ENCODE measurements at regions of chr1 and their contacts with region 1.

Region 1: DNA sequence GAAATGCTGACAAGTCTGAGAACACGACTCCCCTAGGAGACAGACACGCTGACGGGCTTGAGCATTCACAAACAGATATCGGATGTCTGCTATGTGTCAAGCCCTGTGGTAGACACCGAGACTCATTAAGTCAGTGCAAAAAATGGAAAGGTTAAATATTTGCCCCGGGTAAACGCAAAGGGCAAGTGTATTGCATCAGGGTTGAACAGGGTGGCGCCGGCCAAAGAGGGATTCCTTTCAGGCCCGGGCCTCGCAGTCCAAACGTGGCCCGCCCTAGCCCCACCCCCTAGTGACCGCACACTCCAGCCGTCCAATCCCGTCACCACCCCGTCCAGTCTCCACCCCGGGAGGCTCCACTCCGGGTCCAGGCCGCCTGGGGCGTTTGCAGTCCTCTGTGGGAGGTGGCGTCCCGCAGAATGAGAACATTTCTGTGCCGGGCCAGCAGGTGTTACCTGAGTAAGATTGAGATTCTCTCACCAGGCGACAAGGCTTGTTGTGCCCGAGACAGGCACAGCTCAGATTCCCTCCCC is 16.3 kb upstream of the TMEM9 start:
- DNase-seq: peak; percentile 99
- H3K4me3 ChIP-seq: peak overlapping the region; percentile 33
- H3K4me3 Mint-ChIP-seq: peak overlapping the region; percentile 84
- H3K27ac Mint-ChIP-seq: peak overlapping the region; percentile 91
- H3K4me1 ChIP-seq: peaks cover 44% of the 10 kb centered on the region
- H3K4me1 Mint-ChIP-seq: peaks cover 42% of the 10 kb centered on the region
- H3K27me3 ChIP-seq: no peaks in the 10 kb centered on the region
- H3K27me3 Mint-ChIP-seq: no peaks in the 10 kb centered on the region
- CTCF ChIP-seq: no peak

Region 2: DNA sequence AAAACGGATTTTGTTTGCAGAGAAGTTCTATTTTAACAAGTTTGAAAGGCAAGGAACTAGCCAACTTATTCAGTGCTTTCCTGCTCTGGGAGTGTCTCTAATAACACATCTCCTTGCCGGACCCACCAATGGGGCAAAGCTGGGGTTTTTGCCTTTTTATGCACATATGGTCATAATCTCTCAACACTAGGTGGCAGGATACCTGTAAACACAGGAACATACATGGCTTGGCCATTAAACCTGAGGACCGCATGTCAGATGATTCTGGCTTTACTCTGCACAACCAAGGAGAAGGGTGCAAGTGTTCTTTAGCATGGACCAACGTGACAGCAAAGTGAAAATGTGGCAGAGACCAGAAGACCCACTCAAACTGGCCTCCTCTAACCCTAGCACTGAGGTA is 21.2 kb before region 1 on chr1:
- CTCF ChIA-PET with region 1: interaction called, 10 read pairs
- POLR2A ChIA-PET with region 1: interaction called, 5 read pairs
- intact Hi-C with region 1: loop called (anchors 1 kb)
- DNase-seq: peak in 1 of 2 experiments; percentile 55
- H3K4me3 ChIP-seq: no peak overlapping the region
- H3K4me3 Mint-ChIP-seq: no peak overlapping the region
- H3K27ac Mint-ChIP-seq: no peak overlapping the region
- H3K4me1 ChIP-seq: peaks cover 6% of the 10 kb centered on the region; the same call in 1 of the 2 replicates
- H3K4me1 Mint-ChIP-seq: no peaks in the 10 kb centered on the region
- H3K27me3 ChIP-seq: no peaks in the 10 kb centered on the region
- H3K27me3 Mint-ChIP-seq: no peaks in the 10 kb centered on the region
- CTCF ChIP-seq: peak; percentile 54 to 69

Region 3: DNA sequence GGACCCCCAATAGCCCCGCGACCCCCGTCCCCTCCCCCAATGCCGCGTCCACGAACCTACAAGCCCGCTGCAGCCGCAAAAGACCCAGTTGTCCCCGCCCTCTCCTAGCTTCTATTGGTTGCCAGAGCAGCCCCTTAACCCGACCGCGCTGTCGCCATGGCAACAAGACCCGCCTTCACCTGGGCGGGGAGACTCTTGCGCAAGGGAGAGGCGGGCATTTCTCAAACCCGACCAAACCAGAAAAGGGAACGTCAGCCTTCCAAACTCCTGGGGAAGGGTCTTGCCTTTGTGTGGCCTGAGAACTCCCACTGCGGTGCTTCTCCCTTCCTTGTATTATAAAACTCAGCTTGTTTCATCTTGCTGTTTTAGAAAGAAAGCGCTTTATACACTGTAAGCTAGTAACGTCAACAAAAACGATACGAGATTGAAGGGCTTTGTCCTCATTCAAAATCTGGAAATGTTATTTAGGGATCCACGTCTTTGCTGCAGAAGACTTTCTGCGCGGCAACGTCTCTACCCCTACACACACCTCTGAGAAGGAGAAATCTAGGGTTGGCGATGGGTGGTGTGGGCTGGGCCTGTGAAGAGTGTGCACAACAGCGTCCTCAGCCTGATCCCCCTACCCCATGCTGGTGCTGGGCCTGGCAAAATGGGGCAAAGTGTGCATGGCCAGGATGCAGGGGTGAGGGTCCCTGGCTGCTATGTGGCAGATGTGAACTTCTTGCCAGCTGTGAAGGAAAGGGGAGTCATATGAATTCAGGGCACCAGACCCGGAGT is 16.0 kb before region 1 on chr1 and contains the start of gene TMEM9:
- CTCF ChIA-PET with region 1: interaction called, 10 read pairs
- POLR2A ChIA-PET with region 1: interaction called, 5 read pairs
- intact Hi-C with region 1: loop called (anchors 1 kb)
- DNase-seq: peak; percentile 96 to 97
- H3K4me3 ChIP-seq: peak within 1 kb of the TSS; percentile 86
- H3K4me3 Mint-ChIP-seq: peak within 1 kb of the TSS; percentile 84
- H3K27ac Mint-ChIP-seq: peak within 1 kb of the TSS; percentile 86
- H3K4me1 ChIP-seq: peaks cover 12% of the 10 kb centered on the region
- H3K4me1 Mint-ChIP-seq: no peaks in the 10 kb centered on the region
- H3K27me3 ChIP-seq: no peaks in the 10 kb centered on the region
- H3K27me3 Mint-ChIP-seq: no peaks in the 10 kb centered on the region
- CTCF ChIP-seq: no peak
- total RNA-seq, gene TMEM9: 111 and 125 TPM in 2 replicates

Region 4: GRCh38 chr1:201399352-201400126 is 228.9 kb after region 1 on chr1:
- CTCF ChIA-PET with region 1: no interaction called
- POLR2A ChIA-PET with region 1: no interaction called
- intact Hi-C with region 1: no loop called
- DNase-seq: peak; percentile 89 to 90
- H3K4me3 ChIP-seq: peak overlapping the region; percentile 79
- H3K4me3 Mint-ChIP-seq: peak overlapping the region; percentile 73
- H3K27ac Mint-ChIP-seq: peak overlapping the region; percentile 73
- H3K4me1 ChIP-seq: peaks cover 60% of the 10 kb centered on the region
- H3K4me1 Mint-ChIP-seq: peaks cover 32% of the 10 kb centered on the region
- H3K27me3 ChIP-seq: no peaks in the 10 kb centered on the region
- H3K27me3 Mint-ChIP-seq: no peaks in the 10 kb centered on the region
- CTCF ChIP-seq: no peak